ENCODE measurements at regions of chr5 and their contacts with region 1.

Region 1: DNA sequence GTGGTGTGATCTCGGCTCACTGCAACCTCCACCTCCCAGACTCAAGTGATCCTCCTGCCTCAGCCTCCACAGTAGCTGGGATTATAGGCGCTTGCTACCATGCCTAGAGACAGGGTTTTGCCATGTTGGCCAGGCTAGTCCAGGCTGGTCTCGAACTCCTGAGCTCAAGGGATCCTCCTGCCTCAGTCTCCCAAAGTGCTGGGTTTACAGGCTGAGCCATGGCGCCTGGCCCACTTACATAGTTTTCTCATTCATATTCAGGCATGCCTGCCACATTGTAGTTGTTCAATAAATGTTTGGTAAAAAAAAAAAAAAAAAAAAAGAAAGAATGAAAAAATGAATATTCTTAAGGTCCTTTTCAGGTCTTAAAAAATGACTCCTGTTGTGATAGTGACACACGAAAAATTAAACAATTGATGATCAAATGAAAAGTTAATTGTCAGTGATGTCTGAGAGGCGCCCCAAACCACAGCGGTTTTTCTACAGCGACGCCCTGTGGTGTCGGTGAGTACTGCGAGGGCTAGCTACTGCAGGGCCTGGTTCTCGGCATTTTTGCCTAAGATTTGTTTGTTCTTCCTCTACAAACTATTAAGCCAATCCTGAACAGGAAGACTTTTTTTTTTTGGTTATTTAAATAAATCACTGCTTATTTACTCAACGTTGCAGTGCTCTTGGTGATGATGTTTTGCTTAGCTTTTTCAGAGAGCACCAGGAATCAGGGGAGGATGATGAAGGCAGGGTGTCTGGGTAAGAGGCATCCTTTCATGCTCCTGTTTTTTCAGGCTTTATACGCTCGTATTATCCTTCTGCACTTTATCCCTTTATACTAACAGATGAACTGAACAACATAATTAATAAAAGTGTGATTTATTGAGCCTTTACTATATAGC is 67.0 kb upstream of the DPYSL3 start:
- DNase-seq: peak in 2 of 3 donors; percentile 49 to 58
- ATAC-seq: peak; percentile 81 to 94 (median 85)
- H3K4me3 ChIP-seq: no peak overlapping the region
- H3K27ac ChIP-seq: no peak overlapping the region
- H3K4me1 ChIP-seq: no peaks in the 10 kb centered on the region
- H3K27me3 ChIP-seq: no peaks in the 10 kb centered on the region
- CTCF ChIP-seq: peak; percentile 74 to 88 (median 82)
- POLR2A ChIP-seq: no peak

Region 2: GRCh38 chr5:147453875-147454814 is 122.7 kb before region 1 on chr5:
- intact Hi-C with region 1: loop called in 1 of 2 experiments (anchors 5 kb)
- DNase-seq: peak; percentile 80 to 88 (median 83)
- ATAC-seq: peak; percentile 87 to 94 (median 91)
- H3K4me3 ChIP-seq: peak overlapping the region; percentile 45 to 57 (median 56)
- H3K27ac ChIP-seq: peak overlapping the region in 1 of 3 donors; percentile 13
- H3K4me1 ChIP-seq: peaks cover 0 to 16% (median 0%) of the 10 kb centered on the region in 4 donors
- H3K27me3 ChIP-seq: peaks cover 0 to 6% of the 10 kb centered on the region in 2 donors
- CTCF ChIP-seq: peak; percentile 54 to 86 (median 82)
- POLR2A ChIP-seq: no peak

Region 3: DNA sequence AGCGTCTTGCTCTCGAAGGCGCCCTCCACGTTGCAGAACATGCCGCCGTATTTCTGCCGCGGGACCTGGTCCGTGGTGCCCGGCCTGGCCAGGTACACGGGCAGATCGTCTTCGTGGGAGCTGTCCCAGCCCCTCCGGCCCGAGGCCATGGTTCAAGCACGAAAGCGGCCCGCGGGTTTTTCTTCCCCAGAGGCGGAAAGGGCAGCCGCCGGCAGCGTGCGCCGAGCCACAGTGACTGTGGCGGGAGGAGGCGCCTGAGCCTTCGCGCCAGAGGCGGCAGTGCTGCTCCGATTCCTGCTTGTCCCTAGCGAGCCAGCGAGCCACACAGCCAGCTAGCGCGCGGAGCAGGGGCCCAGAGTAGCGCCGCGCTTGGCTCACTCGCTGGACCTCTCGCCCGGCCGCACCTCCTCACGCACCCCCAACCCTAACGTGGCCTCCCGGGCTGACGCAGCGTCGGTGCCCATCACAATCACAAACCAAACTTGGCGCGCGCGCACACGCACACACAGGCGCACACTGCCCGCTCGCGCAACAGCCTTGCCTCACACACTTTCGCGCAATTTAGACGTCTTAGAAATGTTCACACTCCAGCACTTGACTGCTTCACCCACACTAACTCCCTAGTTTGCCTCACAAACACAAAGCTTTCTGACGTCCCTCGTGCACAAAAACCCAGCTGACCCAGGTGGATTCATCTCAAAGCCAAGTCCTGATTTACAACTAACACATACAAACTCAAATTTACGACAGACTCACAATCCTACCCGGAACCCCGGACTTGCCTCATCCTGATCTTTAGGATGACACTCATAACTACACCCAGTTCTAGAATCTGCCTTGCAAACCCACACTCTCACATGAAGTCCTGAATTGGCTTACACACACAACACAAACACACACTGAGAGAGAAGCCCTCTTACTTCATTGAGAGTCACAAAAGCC is 66.9 kb before region 1 on chr5 and contains the start of gene DPYSL3:
- intact Hi-C with region 1: no loop called
- DNase-seq: peak; percentile 58 to 66 (median 64)
- ATAC-seq: peak; percentile 83 to 95 (median 94)
- H3K4me3 ChIP-seq: peak within 1 kb of the TSS; percentile 38 to 47 (median 39)
- H3K27ac ChIP-seq: peak within 1 kb of the TSS in 1 of 3 donors; percentile 34
- H3K4me1 ChIP-seq: peaks cover 0 to 6% (median 0%) of the 10 kb centered on the region in 4 donors
- H3K27me3 ChIP-seq: peaks cover 0 to 8% of the 10 kb centered on the region in 2 donors
- CTCF ChIP-seq: peak in 3 of 4 donors; percentile 18 to 29 (median 27)
- POLR2A ChIP-seq: no peak
- total RNA-seq, gene DPYSL3: 1.4 to 3.8 (median 2.3) TPM